ENCODE measurements at regions of chr5 and their contacts with region 1.

Region 1: GRCh38 chr5:180470966-180471582 is 23.1 kb upstream of the CNOT6 start:
- DNase-seq: peak in 1 of 2 donors; percentile 41
- H3K4me3 ChIP-seq: no peak overlapping the region
- H3K27ac ChIP-seq: no peak overlapping the region
- H3K4me1 ChIP-seq: no peaks in the 10 kb centered on the region
- H3K27me3 ChIP-seq: no peaks in the 10 kb centered on the region
- CTCF ChIP-seq: peak; percentile 82 to 87 (median 86)
- POLR2A ChIP-seq: no peak

Region 2: GRCh38 chr5:180291943-180292831 is 178.9 kb before region 1 on chr5 and contains the start of gene MAPK9:
- intact Hi-C with region 1: loop called (anchors 5 kb)
- DNase-seq: peak; percentile 66 to 68
- H3K4me3 ChIP-seq: peak within 1 kb of the TSS; percentile 87 to 100 (median 95)
- H3K27ac ChIP-seq: peak within 1 kb of the TSS; percentile 87 to 94
- H3K4me1 ChIP-seq: peaks cover 0 to 7% of the 10 kb centered on the region in 2 donors
- H3K27me3 ChIP-seq: no peaks in the 10 kb centered on the region
- CTCF ChIP-seq: no peak
- POLR2A ChIP-seq: no peak
- total RNA-seq, gene MAPK9: 31.2 to 37.9 (median 34.7) TPM

Region 3: GRCh38 chr5:180519098-180519497 is 48.0 kb after region 1 on chr5:
- intact Hi-C with region 1: no loop called
- DNase-seq: no peak
- H3K4me3 ChIP-seq: no peak overlapping the region
- H3K27ac ChIP-seq: no peak overlapping the region
- H3K4me1 ChIP-seq: peaks cover 0 to 4% of the 10 kb centered on the region in 2 donors
- H3K27me3 ChIP-seq: no peaks in the 10 kb centered on the region
- CTCF ChIP-seq: no peak
- POLR2A ChIP-seq: no peak

Region 4: DNA sequence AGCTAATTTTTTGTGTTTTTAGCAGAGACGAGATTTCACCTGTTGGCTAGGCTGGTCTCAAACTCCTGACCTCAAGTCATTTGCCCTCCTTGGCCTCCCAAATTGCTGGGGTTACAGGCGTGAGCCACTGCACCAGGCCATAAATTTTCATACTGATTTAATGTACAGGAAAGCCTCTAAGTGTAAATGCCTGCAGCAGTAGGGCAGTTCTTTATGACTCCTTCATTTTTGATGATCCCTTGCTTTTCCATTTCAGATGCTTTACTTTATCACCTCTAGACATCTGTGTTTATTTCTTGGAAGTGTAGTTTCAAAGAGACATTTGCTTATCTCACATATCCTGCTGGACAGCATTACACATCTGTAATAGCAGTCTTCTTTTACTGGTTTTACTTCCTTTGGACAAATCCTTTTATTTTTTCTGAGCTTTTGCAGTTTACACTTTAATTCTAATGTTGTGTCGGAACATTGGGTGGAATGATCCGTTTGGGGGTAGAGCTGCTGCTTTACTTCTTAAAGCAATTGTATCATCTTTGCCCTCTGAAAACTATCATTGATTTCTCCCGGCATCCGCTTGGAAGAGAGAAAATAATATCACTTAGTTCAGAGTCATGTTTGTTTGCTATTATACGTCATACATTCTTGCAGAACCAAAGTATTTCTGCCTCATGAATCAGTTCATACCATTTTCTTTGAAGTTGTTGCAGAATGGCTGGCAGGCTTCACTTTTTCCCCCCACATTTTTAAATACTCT is 84.3 kb after region 1 on chr5:
- intact Hi-C with region 1: no loop called
- DNase-seq: no peak
- H3K4me3 ChIP-seq: no peak overlapping the region
- H3K27ac ChIP-seq: no peak overlapping the region
- H3K4me1 ChIP-seq: no peaks in the 10 kb centered on the region
- H3K27me3 ChIP-seq: no peaks in the 10 kb centered on the region
- CTCF ChIP-seq: no peak
- POLR2A ChIP-seq: no peak

Measured in breast epithelium (tissue), 4 donors.